Activated CD4-positive, alpha-beta memory T cell treated with anti-CD3 and anti-CD28 coated beads, Interleukin-2, amount 10 ng/mL, durations not matched to agents 7 days and 5 days (primary cell): ENCODE measurements at regions of chr15 and their contacts with region 1.

Region 1: DNA sequence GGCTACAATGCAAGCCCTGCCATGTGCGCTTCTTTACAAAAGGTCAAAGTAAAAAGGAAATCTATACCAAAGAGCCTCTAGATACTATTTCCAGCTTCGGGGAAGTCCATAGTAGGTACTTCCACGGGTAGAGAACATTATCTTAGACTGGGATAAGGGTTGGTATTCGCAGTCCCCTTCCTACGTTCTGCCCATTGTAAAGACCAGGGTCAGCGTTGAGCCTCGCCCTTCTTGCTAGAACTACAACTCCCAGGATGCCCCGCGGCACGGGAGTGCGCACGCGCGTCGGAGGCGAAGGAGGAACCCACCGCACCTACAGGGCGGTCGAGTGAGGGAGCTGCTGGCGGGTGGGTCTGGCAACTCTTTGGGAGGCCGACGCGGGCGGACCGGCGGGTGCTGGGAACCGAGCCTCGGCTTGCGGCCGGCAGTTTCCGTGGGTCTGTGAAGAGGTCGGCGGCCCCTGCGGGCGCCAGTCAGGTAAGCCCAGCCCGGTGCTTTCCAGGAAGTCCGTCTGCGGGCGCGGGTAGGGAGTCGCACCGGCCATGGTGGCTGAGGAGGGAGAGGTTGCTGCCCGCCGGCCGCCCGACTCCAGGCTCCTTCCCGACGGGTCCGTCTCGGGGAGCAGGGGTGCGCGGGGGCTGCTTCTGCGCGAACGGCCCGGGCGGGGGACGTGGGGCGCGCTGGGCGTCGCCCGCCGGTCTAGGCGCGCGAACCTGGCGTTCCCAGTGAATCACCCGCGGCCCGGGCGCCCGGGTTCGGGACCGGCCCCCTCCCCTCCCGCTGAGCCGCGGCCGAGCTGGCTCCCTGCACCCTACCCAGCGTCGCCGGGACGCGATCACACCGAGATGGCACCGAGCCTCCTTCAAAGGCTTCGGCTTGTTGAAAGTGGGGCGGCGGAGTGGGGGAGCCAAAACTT is at the start of gene TMOD3:
- DNase-seq: peak; percentile 90
- H3K4me3 Mint-ChIP-seq: peak within 1 kb of the TSS; percentile 98
- H3K27ac Mint-ChIP-seq: peak within 1 kb of the TSS; percentile 97
- H3K4me1 Mint-ChIP-seq: peaks cover 41% of the 10 kb centered on the region
- H3K27me3 Mint-ChIP-seq: peaks cover 9% of the 10 kb centered on the region
- total RNA-seq, gene TMOD3: 77.5 to 79.6 TPM

Region 2: GRCh38 chr15:51801391-51801835 is 28.2 kb before region 1 on chr15:
- CTCF ChIA-PET with region 1: no interaction called
- POLR2A ChIA-PET with region 1: no interaction called
- DNase-seq: no peak
- H3K4me3 Mint-ChIP-seq: no peak overlapping the region
- H3K27ac Mint-ChIP-seq: no peak overlapping the region
- H3K4me1 Mint-ChIP-seq: peaks cover 13% of the 10 kb centered on the region
- H3K27me3 Mint-ChIP-seq: no peaks in the 10 kb centered on the region

Region 3: GRCh38 chr15:51844747-51845425 is 15.3 kb after region 1 on chr15:
- CTCF ChIA-PET with region 1: interaction called, 4 read pairs
- POLR2A ChIA-PET with region 1: interaction called, 10 read pairs
- DNase-seq: no peak
- H3K4me3 Mint-ChIP-seq: no peak overlapping the region
- H3K27ac Mint-ChIP-seq: no peak overlapping the region
- H3K4me1 Mint-ChIP-seq: peaks cover 54% of the 10 kb centered on the region
- H3K27me3 Mint-ChIP-seq: no peaks in the 10 kb centered on the region

Region 4: DNA sequence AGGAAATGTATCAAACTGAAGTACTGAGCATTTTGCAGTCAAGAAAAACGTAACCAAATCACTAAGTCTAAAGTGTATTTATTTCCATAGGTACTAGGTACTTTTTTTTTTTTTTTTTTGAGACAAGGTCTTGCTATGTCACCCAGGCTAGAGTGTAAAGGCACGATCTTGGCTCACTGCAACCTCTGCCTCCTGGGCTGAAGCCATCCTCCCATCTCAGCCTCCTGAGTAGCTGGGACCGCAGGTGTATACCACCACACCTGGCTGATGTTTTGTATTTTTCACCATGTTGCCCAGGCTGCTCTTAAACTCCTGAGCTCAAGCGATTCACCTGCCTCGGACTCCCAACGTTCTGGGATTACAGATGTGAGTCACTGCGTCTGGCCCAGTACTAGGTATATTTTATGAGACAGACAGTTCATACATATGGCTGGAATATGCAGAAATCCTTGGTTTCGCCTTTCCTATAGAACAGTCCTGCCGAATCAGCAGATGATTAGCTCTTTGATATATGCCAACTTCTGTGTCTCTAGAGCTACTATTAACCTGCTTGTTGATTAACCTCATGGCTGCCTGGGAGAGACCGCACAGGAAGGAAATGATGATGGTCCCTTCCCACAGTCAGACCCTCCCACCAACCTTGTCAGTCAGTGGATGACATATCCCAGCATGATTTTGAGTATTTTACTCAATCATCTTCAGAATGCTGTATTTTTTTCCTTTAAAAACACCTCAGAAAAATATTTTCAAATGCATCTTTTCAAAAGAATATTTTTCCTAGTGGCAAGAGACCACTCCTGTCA is 32.1 kb after region 1 on chr15:
- CTCF ChIA-PET with region 1: no interaction called
- POLR2A ChIA-PET with region 1: interaction called, 12 read pairs
- DNase-seq: peak; percentile 83
- H3K4me3 Mint-ChIP-seq: peak overlapping the region; percentile 57
- H3K27ac Mint-ChIP-seq: peak overlapping the region; percentile 68
- H3K4me1 Mint-ChIP-seq: peaks cover 49% of the 10 kb centered on the region
- H3K27me3 Mint-ChIP-seq: no peaks in the 10 kb centered on the region